ENCODE measurements at regions of chr3 and their contacts with region 1.

Region 1: DNA sequence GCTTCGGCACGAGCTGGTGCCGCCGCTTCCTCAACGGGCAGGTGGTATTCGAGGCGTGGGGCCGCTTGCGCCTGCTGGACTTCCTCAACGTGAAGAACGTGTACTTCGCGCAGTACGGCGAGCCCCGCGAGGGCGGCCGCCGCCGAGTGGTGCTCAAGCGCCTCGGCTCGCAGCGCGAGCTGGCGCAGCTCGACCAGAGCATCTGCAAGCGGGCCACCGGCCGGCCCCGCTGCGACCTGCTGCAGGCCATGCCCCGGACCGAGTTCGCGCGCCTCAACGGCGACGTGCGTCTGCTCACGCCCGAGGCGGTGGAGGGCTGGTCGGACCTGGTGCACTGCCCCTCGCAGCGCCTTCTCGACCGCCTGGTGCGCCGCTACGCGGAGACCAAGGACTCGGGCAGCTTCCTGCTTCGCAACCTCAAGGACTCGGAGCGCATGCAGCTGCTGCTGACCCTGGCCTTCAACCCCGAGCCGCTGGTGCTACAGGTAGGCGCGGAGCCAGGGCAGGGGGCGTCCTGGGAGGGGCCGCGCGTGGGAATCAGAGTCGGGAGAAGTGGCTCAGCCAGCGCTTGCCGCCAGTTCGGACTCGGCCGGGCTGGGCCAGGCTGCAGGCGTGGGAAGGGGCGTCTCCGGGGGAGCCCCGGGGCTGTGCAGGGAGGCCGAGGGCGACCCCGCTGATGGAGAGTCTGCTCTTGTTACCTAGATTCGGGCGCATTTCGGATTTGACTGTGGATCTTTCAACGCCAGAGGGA is 1.1 kb downstream of the DIPK2A start:
- DNase-seq: peak; percentile 88
- ATAC-seq: peak; percentile 25
- H3K4me3 ChIP-seq: peak overlapping the region; percentile 84 to 92 (median 90)
- H3K4me3 Mint-ChIP-seq: peak overlapping the region; percentile 97
- H3K27ac ChIP-seq: peak overlapping the region; percentile 91 to 93
- H3K27ac Mint-ChIP-seq: peak overlapping the region; percentile 96
- H3K4me1 ChIP-seq: peaks cover 17 to 46% of the 10 kb centered on the region in 2 donors
- H3K4me1 Mint-ChIP-seq: peaks cover 40% of the 10 kb centered on the region
- H3K27me3 ChIP-seq: no peaks in the 10 kb centered on the region
- H3K27me3 Mint-ChIP-seq: no peaks in the 10 kb centered on the region
- CTCF ChIP-seq: peak; percentile 67

Region 2: DNA sequence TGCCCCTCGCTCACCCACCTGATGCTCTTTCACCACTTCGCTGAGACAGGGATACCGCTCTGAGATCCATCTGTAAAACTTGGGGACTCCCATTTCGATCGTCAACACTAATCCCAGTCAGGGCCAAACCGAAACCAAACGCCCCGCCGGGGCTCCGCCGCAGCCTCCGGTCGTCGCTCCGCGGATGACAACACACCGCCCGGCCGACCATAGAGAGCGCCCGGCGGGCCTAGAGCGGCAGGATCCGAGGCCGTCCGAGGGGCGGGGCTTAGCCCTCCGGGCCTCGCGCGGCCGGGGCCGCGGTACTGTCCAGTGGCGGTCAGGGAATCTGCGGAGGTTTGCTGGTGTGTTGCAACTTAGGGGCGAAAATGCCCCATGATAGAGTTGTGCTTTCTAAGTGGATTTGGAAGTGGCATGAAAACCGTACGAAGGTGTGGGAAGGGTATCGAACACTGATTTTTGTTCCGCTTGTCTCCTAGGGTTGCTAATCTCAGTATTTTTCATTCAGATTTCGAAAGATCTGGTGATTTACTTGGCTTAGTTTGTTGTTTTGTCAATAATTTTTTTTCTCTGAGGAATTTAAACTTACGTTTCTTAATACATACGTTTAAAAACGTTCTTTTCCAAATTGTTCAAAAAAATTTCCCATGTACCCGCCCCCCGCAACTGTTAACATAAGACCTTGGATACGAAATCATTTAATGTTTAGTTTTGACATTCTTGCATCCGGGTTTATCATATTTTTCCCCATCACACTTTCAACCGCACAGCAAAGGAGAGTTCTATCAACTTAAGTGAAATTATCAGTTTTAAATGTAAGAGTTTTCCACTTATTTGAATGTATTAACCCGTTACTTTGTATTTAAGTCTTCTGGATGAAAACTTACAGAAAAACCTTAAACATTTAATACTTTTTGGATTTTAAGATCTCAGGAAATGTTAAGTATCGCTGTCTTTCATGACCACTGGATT is 1524.5 kb before region 1 on chr3 and contains the start of gene XRN1:
- CTCF ChIA-PET with region 1: no interaction called
- POLR2A ChIA-PET with region 1: no interaction called
- intact Hi-C with region 1: loop called (anchors 5 kb)
- DNase-seq: peak; percentile 94
- ATAC-seq: peak; percentile 98
- H3K4me3 ChIP-seq: peak within 1 kb of the TSS; percentile 85 to 100 (median 98)
- H3K4me3 Mint-ChIP-seq: peak within 1 kb of the TSS; percentile 99
- H3K27ac ChIP-seq: peak within 1 kb of the TSS; percentile 97 to 100
- H3K27ac Mint-ChIP-seq: peak within 1 kb of the TSS; percentile 100
- H3K4me1 ChIP-seq: peaks cover 18 to 24% of the 10 kb centered on the region in 2 donors
- H3K4me1 Mint-ChIP-seq: peaks cover 41% of the 10 kb centered on the region
- H3K27me3 ChIP-seq: no peaks in the 10 kb centered on the region
- H3K27me3 Mint-ChIP-seq: no peaks in the 10 kb centered on the region
- CTCF ChIP-seq: no peak
- total RNA-seq, gene XRN1: 78.6 and 91.8 TPM in 2 replicates

Region 3: DNA sequence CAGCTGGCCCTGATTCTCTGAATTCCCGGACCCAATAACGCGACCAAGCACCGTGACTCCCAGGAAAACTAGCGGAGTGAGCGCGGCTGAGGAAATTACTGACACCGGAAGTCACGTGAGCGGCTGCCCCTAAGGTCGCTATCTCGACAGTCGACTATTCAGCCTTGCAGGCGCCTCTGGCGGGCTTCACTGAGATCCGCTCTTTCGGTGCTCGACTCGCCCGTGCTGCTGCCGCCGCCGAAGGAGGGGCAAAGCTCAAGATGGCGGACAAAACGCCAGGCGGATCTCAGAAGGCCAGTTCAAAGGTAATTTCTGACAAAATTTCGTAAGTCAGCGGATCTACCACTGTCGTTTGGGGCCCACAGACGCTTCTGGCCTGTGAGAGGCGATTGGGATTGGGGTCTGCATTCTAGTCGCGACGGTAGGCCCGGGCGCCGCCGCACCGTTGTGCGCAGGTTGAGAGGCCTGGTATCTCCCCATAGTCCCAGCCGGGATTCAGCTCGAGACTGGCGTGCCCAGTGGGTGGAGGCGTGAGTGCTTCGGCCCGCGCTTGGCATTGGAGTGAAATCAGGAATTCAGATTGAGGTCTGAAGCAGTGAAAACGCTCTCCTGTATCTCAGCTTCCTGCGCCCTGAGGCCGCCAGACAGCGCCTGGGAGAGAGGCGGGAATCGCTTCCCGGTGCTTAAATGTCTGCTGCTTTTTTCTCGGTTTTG is 971.2 kb before region 1 on chr3 and contains the start of gene U2SURP:
- CTCF ChIA-PET with region 1: no interaction called
- POLR2A ChIA-PET with region 1: interaction called, 17 read pairs
- intact Hi-C with region 1: no loop called
- DNase-seq: peak; percentile 95
- ATAC-seq: peak; percentile 96
- H3K4me3 ChIP-seq: peak within 1 kb of the TSS; percentile 73 to 100 (median 97)
- H3K4me3 Mint-ChIP-seq: peak within 1 kb of the TSS; percentile 96
- H3K27ac ChIP-seq: peak within 1 kb of the TSS; percentile 86 to 98
- H3K27ac Mint-ChIP-seq: peak within 1 kb of the TSS; percentile 96
- H3K4me1 ChIP-seq: peaks cover 19 to 20% of the 10 kb centered on the region in 2 donors
- H3K4me1 Mint-ChIP-seq: peaks cover 34% of the 10 kb centered on the region
- H3K27me3 ChIP-seq: no peaks in the 10 kb centered on the region
- H3K27me3 Mint-ChIP-seq: no peaks in the 10 kb centered on the region
- CTCF ChIP-seq: no peak
- total RNA-seq, gene U2SURP: 138 and 169 TPM in 2 replicates

Region 4: DNA sequence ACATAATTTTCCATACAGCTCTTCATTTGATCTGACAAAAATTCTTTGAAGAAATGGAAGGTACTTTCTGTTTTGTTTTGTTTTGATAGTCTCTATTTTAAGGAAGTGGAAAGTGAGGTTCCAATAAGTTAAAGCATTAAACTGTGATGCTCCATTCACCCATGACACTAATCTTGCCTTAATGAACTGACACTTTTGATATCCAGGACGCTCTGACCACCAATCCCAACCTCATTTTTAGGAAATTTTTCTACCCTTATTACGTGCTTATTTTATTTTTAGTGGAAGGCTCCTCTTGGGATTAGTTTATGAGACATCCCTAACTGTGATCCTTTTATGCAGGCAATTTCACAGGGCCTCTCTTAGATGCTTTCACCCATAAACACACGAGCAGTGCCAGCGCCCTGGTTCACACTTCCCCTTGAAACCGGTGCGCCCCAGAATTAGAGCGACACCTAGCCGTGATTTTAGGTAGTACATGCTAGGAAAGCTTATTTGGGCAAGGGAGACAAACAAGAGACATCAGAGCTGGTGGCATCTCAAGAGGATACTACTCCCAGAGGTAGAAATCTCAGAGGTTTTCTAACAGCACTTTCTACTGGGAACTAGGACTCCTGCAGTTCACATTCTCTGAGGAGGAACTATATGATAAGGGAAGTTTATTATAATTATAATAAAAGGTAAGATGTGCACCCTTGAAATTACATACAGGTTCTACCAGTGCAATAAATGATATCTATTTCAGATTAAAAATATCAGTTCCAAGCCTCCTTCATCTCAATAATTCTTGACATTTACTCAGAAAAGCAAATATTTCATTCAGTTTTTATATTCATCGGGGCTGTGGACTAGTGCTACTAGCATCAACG is 298.3 kb before region 1 on chr3:
- CTCF ChIA-PET with region 1: no interaction called
- POLR2A ChIA-PET with region 1: no interaction called
- intact Hi-C with region 1: loop called (anchors 5 kb)
- DNase-seq: peak; percentile 94
- ATAC-seq: peak; percentile 90
- H3K4me3 ChIP-seq: peak overlapping the region in 3 of 5 experiments; percentile 8 to 57 (median 20)
- H3K4me3 Mint-ChIP-seq: peak overlapping the region; percentile 75
- H3K27ac ChIP-seq: peak overlapping the region; percentile 69 to 77
- H3K27ac Mint-ChIP-seq: peak overlapping the region; percentile 94
- H3K4me1 ChIP-seq: peaks cover 23 to 30% of the 10 kb centered on the region in 2 donors
- H3K4me1 Mint-ChIP-seq: peaks cover 45% of the 10 kb centered on the region
- H3K27me3 ChIP-seq: no peaks in the 10 kb centered on the region
- H3K27me3 Mint-ChIP-seq: no peaks in the 10 kb centered on the region
- CTCF ChIP-seq: peak; percentile 97

Region 5: DNA sequence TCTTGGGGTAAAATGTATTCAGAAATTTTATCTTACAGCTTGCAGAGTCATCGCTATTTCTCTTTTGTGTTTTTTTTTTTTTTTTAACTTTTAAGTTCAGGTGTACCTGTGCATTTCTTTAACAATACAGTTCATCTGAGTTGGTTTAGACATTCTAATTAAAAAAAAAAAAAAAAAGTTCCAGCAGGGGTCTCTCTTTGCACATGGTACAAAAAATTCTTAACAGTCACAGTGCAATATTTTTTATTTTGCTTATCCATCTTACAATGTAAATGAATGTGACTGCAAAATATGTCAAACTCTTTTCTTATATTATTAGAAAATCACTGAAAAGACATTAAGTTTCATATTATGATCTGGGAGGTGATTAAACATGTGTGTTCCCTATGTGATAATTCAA is 76.9 kb before region 1 on chr3:
- CTCF ChIA-PET with region 1: interaction called, 9 read pairs
- POLR2A ChIA-PET with region 1: no interaction called
- intact Hi-C with region 1: loop called (anchors 5 kb)
- DNase-seq: peak; percentile 49
- ATAC-seq: peak; percentile 31
- H3K4me3 ChIP-seq: no peak overlapping the region
- H3K4me3 Mint-ChIP-seq: no peak overlapping the region
- H3K27ac ChIP-seq: no peak overlapping the region
- H3K27ac Mint-ChIP-seq: no peak overlapping the region
- H3K4me1 ChIP-seq: no peaks in the 10 kb centered on the region
- H3K4me1 Mint-ChIP-seq: no peaks in the 10 kb centered on the region
- H3K27me3 ChIP-seq: peaks cover 0 to 2% (median 0%) of the 10 kb centered on the region in 4 experiments
- H3K27me3 Mint-ChIP-seq: peaks cover 8% of the 10 kb centered on the region
- CTCF ChIP-seq: peak; percentile 77

Region 6: GRCh38 chr3:143956838-143957237 is 15.8 kb before region 1 on chr3:
- CTCF ChIA-PET with region 1: interaction called, 34 read pairs
- POLR2A ChIA-PET with region 1: no interaction called
- intact Hi-C with region 1: no loop called
- DNase-seq: no peak
- ATAC-seq: no peak
- H3K4me3 ChIP-seq: no peak overlapping the region
- H3K4me3 Mint-ChIP-seq: no peak overlapping the region
- H3K27ac ChIP-seq: no peak overlapping the region
- H3K27ac Mint-ChIP-seq: no peak overlapping the region
- H3K4me1 ChIP-seq: no peaks in the 10 kb centered on the region
- H3K4me1 Mint-ChIP-seq: peaks cover 3% of the 10 kb centered on the region
- H3K27me3 ChIP-seq: no peaks in the 10 kb centered on the region
- H3K27me3 Mint-ChIP-seq: peaks cover 8% of the 10 kb centered on the region
- CTCF ChIP-seq: no peak

Region 7: DNA sequence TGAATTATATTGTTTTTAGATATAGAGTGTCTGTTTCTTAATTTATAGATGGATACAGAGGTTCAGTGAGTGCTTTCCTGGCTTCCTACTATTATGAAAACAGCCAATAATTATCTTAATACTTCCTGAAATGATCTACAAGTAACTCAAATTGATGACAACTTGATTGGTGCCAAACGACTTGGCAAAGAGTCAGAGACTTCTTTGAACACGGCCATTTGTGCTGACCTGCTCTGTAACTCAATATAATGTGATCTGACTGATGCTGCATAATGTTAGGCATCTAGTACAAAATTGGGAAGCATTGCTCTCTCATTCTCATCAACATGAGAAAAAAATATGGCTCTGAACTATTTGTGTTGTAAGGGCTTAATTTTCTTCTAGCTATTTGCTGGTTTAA is 192.8 kb after region 1 on chr3:
- CTCF ChIA-PET with region 1: no interaction called
- POLR2A ChIA-PET with region 1: no interaction called
- intact Hi-C with region 1: no loop called
- DNase-seq: no peak
- ATAC-seq: no peak
- H3K4me3 ChIP-seq: no peak overlapping the region
- H3K4me3 Mint-ChIP-seq: no peak overlapping the region
- H3K27ac ChIP-seq: no peak overlapping the region
- H3K27ac Mint-ChIP-seq: no peak overlapping the region
- H3K4me1 ChIP-seq: peaks cover 0 to 3% of the 10 kb centered on the region in 2 donors
- H3K4me1 Mint-ChIP-seq: peaks cover 4% of the 10 kb centered on the region
- H3K27me3 ChIP-seq: peaks cover 0 to 3% (median 0%) of the 10 kb centered on the region in 4 experiments
- H3K27me3 Mint-ChIP-seq: no peaks in the 10 kb centered on the region
- CTCF ChIP-seq: no peak

Region 8: DNA sequence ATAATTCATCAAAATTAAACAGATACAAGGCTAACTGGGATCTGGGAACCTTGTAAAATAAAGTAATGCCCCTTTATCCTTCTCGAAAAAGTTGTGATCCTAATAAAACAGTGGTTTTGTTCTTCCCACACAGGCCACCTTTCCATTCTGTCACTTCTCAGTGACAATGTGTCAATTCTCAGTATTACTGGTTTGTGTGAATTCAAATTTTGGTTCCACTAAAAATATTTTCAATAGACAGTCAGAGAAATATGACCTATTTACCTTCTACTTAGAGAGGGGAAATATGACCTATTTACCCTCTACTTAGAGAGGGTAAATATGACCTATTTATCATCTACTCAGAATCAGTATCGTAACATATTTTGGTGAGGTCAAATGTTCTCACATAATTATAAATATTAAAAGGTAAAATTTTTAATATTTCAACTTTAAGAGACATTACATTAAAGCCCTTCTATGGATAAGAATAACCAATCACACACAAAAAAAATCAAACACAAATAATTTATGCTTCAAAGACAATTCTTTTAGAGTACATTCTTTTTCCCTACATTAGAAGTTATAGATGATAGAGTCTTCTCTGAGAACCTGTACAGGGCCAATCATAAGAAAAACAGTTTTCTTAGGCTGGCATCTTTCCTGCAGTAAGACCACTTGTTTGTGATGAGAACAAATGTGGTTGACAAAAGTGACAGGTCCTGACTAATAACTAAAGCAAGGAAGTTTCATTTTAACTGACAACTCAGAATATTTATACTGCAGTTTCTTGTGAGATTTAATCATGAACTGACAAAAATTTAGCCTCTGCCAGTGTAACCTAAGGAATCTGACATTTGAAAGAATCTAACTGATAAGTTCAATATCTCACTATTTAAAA is 322.2 kb after region 1 on chr3:
- CTCF ChIA-PET with region 1: no interaction called
- POLR2A ChIA-PET with region 1: interaction called, 4 read pairs
- intact Hi-C with region 1: loop called (anchors 10 kb)
- DNase-seq: no peak
- ATAC-seq: no peak
- H3K4me3 ChIP-seq: no peak overlapping the region
- H3K4me3 Mint-ChIP-seq: no peak overlapping the region
- H3K27ac ChIP-seq: no peak overlapping the region
- H3K27ac Mint-ChIP-seq: no peak overlapping the region
- H3K4me1 ChIP-seq: peaks cover 0 to 5% of the 10 kb centered on the region in 2 donors
- H3K4me1 Mint-ChIP-seq: peaks cover 10% of the 10 kb centered on the region
- H3K27me3 ChIP-seq: no peaks in the 10 kb centered on the region
- H3K27me3 Mint-ChIP-seq: no peaks in the 10 kb centered on the region
- CTCF ChIP-seq: no peak